Activated CD8-positive, alpha-beta T cell treated with anti-CD3 and anti-CD28 coated beads, Interleukin-2, amount 10 ng/mL, durations not matched to agents 7 days and 5 days (primary cell): ENCODE measurements at regions of chr2 and their contacts with region 1.

Region 1: DNA sequence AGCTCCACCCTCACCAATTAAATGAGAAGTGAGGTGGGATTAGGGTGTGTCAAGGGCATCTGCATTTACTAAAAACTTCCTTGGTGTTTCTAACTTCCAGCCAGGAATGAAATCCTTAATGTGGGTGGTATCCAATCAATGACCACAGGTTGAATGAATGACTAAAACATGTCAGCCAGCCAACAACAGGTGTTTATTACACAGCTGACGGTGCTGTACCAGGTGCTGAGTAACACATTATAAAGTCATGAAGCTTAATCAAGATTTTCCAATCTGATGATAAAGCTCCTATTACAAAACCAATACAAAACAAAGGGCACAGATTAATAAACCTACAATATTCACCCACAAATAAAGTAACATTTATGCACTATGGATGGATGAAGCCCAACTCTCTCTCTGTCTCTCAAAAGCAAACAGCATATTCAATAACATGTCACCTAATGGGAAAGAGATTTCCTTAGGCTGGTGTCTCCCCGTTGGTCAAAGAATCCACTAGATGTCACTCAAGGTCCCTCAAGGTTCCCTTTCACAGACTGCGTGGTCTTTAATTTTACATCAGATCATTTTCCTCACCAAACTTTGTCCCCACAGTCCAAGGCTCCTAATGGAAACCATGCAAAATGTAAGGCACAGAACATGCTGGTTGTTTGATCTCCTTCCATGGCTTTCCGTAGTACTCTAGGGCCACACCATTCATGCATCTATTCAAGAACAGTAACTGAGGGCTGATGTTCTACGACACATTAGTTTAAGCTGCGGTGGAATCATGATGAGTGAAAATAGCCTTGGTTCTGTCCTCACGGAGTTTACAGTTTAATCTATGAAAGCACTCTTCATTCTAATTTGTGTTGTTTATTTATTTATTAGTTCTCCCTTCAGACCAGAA is 6.4 kb upstream of the PTPN4 start:
- DNase-seq: peak; percentile 56
- ATAC-seq: peak; percentile 86
- H3K4me3 Mint-ChIP-seq: no peak overlapping the region
- H3K27ac Mint-ChIP-seq: no peak overlapping the region
- H3K4me1 Mint-ChIP-seq: peaks cover 12% of the 10 kb centered on the region
- H3K27me3 Mint-ChIP-seq: peaks cover 10% of the 10 kb centered on the region

Region 2: DNA sequence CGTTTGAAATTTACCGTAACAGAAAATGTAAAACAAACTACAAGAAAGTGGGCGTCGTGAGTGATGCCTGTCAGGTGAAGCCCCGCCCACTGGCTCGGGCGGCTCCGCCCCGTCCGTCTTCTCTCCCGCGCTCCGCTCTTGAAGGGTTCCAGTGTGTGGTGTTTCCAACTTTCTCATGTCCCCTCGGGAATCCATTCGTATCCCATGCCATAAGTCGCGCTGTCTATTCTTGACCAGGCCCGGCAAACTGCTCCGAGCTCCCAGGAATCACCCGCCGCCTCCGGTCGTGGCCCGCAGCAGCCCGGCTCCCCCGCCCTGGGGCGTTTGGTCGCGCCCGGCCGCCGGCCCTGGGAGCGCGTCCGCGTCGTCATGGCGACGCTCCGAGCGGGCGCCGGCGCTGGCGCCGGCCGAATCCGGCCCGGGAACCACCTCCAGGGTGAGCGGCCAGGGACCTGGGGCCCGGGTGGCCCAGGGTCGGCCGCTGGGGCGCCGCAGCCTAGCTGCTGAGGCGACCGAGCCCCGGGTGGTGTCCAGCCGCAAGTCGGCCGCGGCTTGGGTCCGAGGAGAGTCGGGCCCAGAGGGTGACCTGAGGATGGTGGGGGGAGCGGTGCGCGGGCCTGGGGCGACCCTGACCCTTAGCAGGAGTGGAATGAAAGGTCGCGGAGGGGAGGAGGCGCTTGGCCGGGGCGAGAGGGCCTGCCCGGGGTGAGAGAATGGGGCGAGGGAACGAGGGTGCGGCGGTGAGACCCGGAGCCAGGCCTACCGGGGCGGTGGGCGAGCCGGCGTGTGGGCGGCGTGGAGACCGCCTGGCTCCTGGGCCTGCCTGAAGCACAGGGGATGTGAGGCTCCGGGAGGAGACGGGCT is 209.0 kb before region 1 on chr2 and contains the start of gene CFAP221:
- CTCF ChIA-PET with region 1: no interaction called
- POLR2A ChIA-PET with region 1: no interaction called
- DNase-seq: peak; percentile 58
- ATAC-seq: peak; percentile 87
- H3K4me3 Mint-ChIP-seq: peak within 1 kb of the TSS; percentile 35
- H3K27ac Mint-ChIP-seq: no peak within 1 kb of the TSS
- H3K4me1 Mint-ChIP-seq: peaks cover 3% of the 10 kb centered on the region
- H3K27me3 Mint-ChIP-seq: peaks cover 32% of the 10 kb centered on the region
- total RNA-seq, gene CFAP221: not detected

Region 3: DNA sequence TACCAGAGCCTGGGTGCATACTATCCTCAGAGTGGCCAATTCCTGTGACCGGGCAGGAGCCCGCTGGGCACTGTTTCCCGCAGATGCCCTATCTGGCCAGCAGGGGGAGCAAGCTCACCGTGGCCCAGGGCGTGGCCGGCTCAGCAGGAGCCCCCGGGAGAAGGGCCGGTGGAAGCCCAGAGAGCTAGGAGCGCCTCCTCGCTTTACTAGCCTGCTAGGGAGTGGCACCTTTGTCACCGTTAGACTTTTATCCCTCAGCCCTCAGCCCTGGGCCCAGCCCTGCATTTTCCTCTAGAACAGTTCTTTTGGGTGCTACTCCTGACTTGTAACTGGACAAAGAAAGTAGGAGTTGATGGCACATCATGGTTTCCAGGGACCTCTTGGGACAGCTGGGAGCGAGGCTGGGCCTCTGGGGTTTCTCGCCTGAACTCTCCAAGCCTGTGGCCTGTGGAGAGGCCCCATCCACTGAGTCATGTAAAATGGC is 50.3 kb before region 1 on chr2:
- CTCF ChIA-PET with region 1: interaction called, 11 read pairs
- POLR2A ChIA-PET with region 1: no interaction called
- DNase-seq: peak; percentile 76
- ATAC-seq: peak; percentile 94
- H3K4me3 Mint-ChIP-seq: no peak overlapping the region
- H3K27ac Mint-ChIP-seq: no peak overlapping the region
- H3K4me1 Mint-ChIP-seq: peaks cover 17% of the 10 kb centered on the region
- H3K27me3 Mint-ChIP-seq: peaks cover 4% of the 10 kb centered on the region

Region 4: DNA sequence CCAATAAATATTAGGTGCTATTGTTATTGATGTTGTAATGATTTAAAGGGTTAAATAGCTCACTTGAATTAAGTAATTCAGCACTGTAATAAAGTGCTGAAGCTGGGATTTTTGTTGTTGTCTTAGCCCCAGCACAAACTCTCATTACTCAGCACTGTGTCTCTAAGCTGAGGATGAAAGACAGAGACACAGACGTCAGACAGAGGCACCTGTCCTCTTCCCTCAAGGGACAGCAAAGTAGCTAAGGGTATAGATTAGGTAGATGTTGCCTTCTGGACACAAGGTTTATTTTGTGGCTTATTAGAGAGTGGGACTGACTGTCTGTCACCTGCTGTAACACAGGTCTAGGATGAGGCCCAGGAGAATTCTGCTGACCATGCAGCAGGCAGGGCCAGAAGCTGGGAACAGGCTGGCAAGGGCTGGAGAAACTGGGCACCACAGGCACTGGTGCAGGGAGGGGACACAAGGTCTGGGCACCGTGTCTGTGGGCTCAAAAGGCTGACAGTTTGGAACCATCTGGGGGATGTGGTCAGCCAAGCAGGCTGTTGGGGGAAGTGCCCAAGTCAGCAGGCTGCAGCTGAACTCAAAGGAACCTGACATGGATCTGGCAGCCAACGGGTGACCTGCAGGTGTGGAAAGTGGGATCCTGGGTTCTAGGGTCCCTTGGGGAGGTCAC is 13.6 kb before region 1 on chr2:
- CTCF ChIA-PET with region 1: interaction called, 18 read pairs
- POLR2A ChIA-PET with region 1: no interaction called
- DNase-seq: no peak
- ATAC-seq: no peak
- H3K4me3 Mint-ChIP-seq: no peak overlapping the region
- H3K27ac Mint-ChIP-seq: no peak overlapping the region
- H3K4me1 Mint-ChIP-seq: peaks cover 6% of the 10 kb centered on the region
- H3K27me3 Mint-ChIP-seq: peaks cover 2% of the 10 kb centered on the region

Region 5: DNA sequence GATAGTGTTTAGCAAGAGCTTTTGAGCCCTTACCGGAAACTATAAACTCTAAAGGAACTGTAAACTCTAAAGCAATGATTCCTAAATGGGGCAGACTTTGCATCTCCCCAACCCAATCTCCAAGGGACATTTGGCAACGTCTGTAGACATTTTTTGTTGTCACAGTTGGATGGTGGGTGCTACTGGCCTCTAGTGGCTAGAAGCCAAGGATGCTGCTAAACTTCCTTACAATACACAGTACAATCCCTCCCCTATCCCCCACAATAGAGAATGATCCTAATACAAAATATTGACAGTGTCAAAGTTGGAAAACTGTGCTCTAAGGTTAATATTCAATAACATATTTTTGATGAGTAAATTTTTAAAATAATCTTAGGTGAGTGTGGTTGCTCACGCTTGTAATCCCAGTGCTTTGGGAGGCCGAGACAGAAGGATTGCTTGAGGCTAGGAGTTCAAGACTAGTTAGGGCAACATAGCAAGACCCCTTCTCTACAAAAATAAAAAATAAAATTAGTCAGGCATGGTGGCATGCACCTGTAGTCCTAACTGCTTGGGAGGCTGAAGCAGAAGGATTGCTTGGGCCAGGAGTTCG is 73.2 kb after region 1 on chr2:
- CTCF ChIA-PET with region 1: interaction called, 75 read pairs
- POLR2A ChIA-PET with region 1: no interaction called
- DNase-seq: peak; percentile 57
- ATAC-seq: peak; percentile 76
- H3K4me3 Mint-ChIP-seq: no peak overlapping the region
- H3K27ac Mint-ChIP-seq: no peak overlapping the region
- H3K4me1 Mint-ChIP-seq: peaks cover 28% of the 10 kb centered on the region
- H3K27me3 Mint-ChIP-seq: no peaks in the 10 kb centered on the region